ENCODE measurements at regions of chr11 and their contacts with region 1.

Region 1: DNA sequence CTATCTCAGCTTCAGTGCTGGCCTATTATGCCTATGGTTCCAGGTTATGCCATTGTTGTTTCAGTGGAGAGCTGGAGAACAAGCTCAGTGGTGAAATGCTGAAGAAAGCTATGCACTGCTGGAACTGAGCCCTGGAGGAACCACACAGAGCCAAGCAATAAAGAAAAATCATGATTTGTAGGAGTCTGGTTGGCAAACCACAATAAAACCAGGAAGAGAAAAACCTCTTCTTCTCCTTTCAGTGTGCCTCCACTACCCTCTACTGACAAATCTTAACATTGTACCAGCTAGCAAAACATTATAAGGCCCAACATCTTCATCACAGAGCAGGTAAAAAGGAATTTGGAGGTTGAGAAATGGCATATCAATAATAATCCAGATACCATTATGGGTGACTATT is 5.3 kb downstream of the OR51F2 start:
- DNase-seq: no peak
- H3K4me3 ChIP-seq: no peak overlapping the region
- H3K27ac ChIP-seq: no peak overlapping the region
- H3K4me1 ChIP-seq: no peaks in the 10 kb centered on the region
- H3K27me3 ChIP-seq: no peaks in the 10 kb centered on the region
- CTCF ChIP-seq: no peak
- EP300 ChIP-seq: no peak
- POLR2A ChIP-seq: no peak

Region 2: DNA sequence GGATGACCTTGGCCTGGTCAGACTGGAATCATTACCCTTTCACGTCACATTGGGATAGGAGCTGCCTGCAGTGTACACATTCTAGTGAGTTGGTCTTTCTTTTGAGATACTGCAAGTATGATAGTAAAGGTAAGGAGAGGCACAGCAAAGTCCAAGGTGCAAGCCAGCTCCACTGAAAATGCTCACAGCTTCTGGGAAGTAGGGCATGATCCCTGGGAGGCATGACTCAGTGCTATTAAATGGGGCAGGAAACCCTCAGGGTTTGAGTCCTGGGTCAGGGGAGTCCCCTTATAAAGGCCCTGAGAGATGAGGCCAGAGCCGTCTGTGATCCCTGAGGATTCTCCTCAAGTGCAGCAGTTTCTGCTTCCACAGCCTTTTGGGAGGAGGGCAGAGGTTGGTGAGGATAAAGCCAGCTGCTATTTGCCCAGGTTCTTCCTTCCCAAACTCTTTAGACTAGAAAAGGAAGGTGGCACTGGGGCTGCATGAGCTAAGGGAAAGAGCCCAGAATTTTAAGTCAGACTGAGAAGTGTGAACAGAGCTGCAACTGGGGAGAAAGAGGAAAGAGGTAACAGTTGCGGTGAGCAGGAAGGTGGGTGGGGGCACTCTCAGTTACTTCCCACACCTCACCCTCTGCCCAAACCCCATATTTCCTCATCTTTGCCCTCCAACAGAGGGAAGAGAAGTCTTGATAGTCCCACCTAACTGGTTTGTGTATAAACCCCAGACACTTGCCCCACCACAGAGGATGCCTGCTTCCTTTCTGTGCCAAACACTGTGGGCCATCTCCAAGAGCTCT is 358.4 kb before region 1 on chr11:
- intact Hi-C with region 1: no loop called
- DNase-seq: no peak
- H3K4me3 ChIP-seq: no peak overlapping the region
- H3K27ac ChIP-seq: no peak overlapping the region
- H3K4me1 ChIP-seq: no peaks in the 10 kb centered on the region
- H3K27me3 ChIP-seq: no peaks in the 10 kb centered on the region
- CTCF ChIP-seq: no peak
- EP300 ChIP-seq: no peak
- POLR2A ChIP-seq: no peak

Region 3: DNA sequence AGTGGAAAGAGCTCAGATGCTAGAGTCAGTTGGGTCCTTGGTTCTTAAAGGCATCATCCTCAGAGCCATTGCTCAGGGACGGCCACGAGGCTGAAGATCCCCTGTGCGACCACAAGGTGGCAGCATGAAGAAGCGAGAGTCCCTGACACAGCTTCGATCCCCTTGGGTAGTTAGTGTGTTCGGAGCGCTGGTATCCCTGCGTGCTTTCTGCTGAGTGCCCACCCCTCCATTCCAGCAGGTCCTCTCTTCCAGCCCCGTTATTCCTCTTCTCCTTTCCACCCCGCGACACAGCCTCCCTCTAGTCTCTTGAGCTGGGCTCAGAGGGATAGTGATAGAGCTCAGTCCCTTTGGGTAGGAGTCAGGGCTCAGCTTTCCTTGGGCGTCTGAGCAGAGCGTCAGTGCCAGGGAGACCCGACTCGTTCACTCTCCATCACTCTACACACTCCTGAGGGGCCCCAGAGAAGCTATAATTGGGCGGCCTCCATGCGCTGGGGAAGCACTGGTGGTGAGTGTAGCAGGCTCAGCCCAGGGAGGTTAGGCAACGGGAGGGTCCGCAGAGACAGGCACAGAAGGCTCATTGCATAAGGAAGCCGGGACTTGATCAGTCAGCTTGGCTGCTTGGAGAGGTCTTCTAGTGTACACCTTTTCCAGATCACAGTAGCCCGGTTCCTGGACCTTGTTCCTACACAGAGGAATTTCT is 189.3 kb before region 1 on chr11 and contains the start of gene OR51D1:
- intact Hi-C with region 1: loop called in 1 of 4 experiments (anchors 5 kb)
- DNase-seq: peak; percentile 62 to 84 (median 72)
- H3K4me3 ChIP-seq: no peak within 1 kb of the TSS
- H3K27ac ChIP-seq: no peak within 1 kb of the TSS
- H3K4me1 ChIP-seq: peaks cover 4% of the 10 kb centered on the region
- H3K27me3 ChIP-seq: no peaks in the 10 kb centered on the region
- CTCF ChIP-seq: peak; percentile 56 to 68 (median 65)
- EP300 ChIP-seq: no peak
- POLR2A ChIP-seq: no peak
- total RNA-seq, gene OR51D1: not detected

Measured in ovary (tissue), 10 donors.